ENCODE measurements at regions of chr1 and their contacts with region 1.

Region 1: GRCh38 chr1:202135221-202135721 is 9.3 kb downstream of the ARL8A start:
- DNase-seq: peak in 8 of 10 donors; percentile 61 to 96 (median 70)

Region 2: GRCh38 chr1:201895913-201896807 is 239.1 kb before region 1 on chr1:
- intact Hi-C with region 1: loop called (anchors 5 kb)
- DNase-seq: peak; percentile 72 to 98 (median 87)

Region 3: GRCh38 chr1:202009326-202010179 is 125.7 kb before region 1 on chr1:
- intact Hi-C with region 1: loop called (anchors 1 kb)
- DNase-seq: peak in 8 of 10 donors; percentile 49 to 95 (median 81)

Region 4: DNA sequence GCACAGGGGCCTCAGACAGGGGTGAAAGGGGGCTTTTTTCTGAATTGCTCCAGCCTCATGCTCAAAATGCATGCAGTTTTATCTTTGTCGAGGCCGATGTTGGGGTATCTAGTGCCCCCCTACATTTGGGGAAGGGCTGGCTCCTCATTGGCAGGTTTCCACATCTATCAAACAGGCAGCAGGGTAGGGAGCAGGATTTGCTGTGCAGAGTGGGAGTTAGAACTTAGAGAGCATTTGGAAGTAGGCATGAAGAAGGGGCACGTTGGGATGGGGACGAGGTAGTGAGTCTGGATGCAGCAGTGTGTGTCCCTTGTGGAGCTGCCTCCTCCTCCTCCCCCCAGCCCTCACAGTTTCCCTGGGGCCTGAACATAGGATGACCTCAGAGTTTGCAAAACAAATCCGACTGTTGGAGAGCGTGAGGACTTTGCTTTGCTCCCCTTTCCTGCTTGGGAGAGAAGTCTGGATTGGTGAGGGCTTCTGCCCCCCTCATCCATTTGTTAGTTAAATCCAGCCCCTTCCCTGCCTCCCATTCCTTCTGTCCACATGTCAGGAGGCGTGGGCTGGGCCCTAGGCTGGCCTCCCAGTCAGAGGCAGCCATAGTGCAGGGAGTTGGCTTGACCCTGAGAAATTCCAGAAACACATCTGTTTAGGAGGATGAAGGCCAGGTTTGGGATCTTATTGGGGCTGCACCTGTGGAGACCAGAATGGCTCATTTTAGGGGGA is 49.4 kb before region 1 on chr1:
- intact Hi-C with region 1: loop called (anchors 1 kb)
- DNase-seq: peak in 9 of 10 donors; percentile 22 to 95 (median 60)

Region 5: DNA sequence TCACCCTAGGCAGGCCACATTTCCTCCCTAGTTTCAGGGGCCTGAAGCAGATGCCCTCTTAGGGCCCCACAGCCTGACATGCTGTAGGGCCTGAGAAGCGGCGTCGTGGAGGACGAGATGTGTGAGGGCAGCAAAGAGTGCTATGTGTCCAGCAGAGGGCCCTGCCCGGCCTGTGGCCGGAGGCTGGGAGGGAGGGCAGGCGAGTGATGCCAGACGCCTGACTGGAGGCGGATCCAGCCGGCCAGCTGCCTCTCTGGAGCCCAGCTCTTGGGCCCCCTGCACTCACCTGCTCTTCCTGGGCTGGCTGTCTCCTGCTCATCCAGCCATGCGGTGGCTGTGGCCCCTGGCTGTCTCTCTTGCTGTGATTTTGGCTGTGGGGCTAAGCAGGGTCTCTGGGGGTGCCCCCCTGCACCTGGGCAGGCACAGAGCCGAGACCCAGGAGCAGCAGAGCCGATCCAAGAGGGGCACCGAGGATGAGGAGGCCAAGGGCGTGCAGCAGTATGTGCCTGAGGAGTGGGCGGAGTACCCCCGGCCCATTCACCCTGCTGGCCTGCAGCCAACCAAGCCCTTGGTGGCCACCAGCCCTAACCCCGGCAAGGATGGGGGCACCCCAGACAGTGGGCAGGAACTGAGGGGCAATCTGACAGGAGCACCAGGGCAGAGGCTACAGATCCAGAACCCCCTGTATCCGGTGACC is 12.5 kb before region 1 on chr1 and contains the start of gene GPR37L1:
- intact Hi-C with region 1: loop called (anchors 1 kb)
- DNase-seq: peak; percentile 75 to 98 (median 82)

Measured in posterior cingulate gyrus (tissue), 11 donors.